KBM-7 (cell line): ENCODE measurements at regions of chr1 and their contacts with region 1.

Region 1: GRCh38 chr1:92461364-92462097 is 25.2 kb downstream of the GFI1 start:
- DNase-seq: peak; percentile 88

Region 2: GRCh38 chr1:92310185-92310597 is 151.3 kb before region 1 on chr1:
- in situ Hi-C with region 1: loop called (anchors 10 kb)
- DNase-seq: peak; percentile 68

Region 3: GRCh38 chr1:92519043-92519442 is 57.5 kb after region 1 on chr1:
- in situ Hi-C with region 1: no loop called
- DNase-seq: no peak

Region 4: DNA sequence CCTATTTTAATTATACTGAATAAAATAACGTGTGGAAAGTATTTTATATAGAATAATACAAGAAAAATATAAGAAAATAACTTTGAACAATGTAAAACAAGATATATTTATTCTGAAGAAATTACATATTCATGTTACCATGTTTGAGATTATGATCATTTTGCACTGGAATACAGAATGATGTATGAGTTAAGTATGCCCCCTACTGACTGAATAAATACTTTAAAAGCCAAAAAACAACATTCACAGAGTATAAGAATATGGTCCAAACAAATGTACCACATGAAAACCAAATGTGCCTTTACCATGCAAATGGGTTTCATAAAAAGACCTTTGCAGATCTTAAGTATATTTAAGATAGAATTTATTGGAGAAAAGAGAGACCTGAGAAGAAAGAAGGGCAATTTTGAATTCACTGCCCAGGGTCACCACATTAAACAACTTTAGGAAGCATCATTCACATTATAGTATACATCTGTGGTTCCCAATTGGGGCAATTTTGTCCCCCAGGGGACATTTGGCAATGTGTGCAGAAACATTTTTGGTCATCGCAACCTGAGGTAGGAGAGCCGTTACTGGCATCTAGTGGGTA is 161.8 kb after region 1 on chr1:
- in situ Hi-C with region 1: no loop called
- DNase-seq: peak; percentile 54